Naive thymus-derived CD4-positive, alpha-beta T cell (primary cell): ENCODE measurements at regions of chr5 and their contacts with region 1.

Region 1: GRCh38 chr5:143824851-143825720 is 13.1 kb downstream of the HMHB1 start:
- DNase-seq: peak; percentile 56 to 86 (median 75)
- ATAC-seq: peak; percentile 94
- H3K4me3 ChIP-seq: no peak overlapping the region
- H3K4me3 Mint-ChIP-seq: no peak overlapping the region
- H3K27ac ChIP-seq: no peak overlapping the region
- H3K27ac Mint-ChIP-seq: no peak overlapping the region
- H3K4me1 ChIP-seq: peaks cover 0 to 6% of the 10 kb centered on the region in 2 donors
- H3K4me1 Mint-ChIP-seq: peaks cover 0 to 18% (median 10%) of the 10 kb centered on the region in 7 donors
- H3K27me3 ChIP-seq: no peaks in the 10 kb centered on the region
- H3K27me3 Mint-ChIP-seq: peaks cover 0 to 5% (median 3%) of the 10 kb centered on the region in 5 donors

Region 2: DNA sequence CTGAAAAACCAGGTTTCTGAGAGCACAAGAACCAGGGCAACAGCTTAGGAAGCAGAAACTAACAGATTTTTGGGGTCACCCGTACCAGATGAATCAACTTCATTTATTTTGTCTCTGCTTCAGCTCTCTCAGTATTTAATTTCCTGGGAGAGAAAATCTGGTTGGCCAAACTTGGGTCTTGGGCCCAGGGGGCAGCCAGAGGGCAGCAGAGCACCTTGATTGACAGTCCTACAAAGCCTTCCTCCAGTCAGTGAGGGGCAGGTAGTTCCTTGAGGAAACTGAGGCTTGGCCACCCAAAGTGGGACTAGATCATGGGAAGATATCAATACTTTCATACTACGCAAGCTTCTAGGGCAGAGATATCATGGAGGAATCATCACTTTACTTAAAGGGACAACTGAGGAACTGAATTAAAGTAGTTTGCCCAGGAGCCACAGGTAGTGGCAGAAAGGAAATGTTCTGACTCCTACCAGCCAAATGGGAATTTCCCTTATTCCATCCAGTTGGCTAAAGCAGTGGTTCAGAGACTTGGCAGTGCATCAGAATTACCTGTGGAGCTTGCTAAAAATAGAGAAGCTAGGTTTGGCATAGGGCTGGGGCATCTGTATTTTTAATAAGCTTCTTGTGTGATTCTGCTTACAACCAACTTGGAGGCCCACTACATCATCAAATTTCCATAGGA is 1076.4 kb before region 1 on chr5:
- CTCF ChIA-PET with region 1: no interaction called
- POLR2A ChIA-PET with region 1: no interaction called
- intact Hi-C with region 1: loop called in 1 of 2 experiments (anchors 1 kb)
- DNase-seq: peak in 8 of 9 donors; percentile 13 to 67 (median 54)
- ATAC-seq: peak; percentile 67
- H3K4me3 ChIP-seq: no peak overlapping the region
- H3K4me3 Mint-ChIP-seq: no peak overlapping the region
- H3K27ac ChIP-seq: no peak overlapping the region
- H3K27ac Mint-ChIP-seq: no peak overlapping the region
- H3K4me1 ChIP-seq: no peaks in the 10 kb centered on the region
- H3K4me1 Mint-ChIP-seq: peaks cover 0 to 17% (median 0%) of the 10 kb centered on the region in 7 donors
- H3K27me3 ChIP-seq: no peaks in the 10 kb centered on the region
- H3K27me3 Mint-ChIP-seq: peaks cover 0 to 14% (median 0%) of the 10 kb centered on the region in 5 donors

Region 3: DNA sequence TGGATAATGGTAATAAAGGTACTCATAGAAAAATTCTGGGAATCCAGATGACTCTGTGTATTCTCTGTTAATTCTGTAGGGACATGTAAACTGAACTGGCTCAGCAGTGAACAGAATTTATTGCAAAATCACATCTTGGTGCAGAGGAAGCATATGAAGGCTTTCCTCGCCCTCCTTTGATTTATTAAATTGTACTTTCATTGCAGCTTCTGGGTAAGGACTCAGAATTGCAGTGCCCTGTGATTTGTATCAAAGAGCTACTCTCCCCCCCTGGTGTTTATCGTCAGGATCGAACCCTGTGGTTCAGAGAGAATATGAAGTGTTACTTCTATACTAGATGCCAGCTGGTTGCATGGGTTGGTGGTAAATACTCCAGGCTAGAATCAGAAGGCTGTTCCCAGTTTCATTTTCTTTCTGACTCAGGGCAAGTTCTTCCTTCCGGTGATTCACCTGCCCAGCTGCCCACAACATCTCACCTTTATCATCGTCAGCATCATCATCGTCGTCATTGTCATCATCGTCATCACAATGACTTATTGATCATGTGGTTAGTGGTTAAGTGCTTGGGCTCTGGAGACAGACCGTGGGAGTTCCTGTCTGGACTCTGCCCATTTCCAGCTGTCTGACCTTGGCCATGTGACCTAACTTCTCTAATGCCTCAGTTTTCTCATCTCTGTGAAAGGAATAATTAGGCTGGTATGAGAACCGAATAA is 816.1 kb before region 1 on chr5:
- CTCF ChIA-PET with region 1: no interaction called
- POLR2A ChIA-PET with region 1: no interaction called
- intact Hi-C with region 1: loop called in 1 of 2 experiments (anchors 2 kb)
- DNase-seq: peak in 8 of 9 donors; percentile 10 to 73 (median 36)
- ATAC-seq: peak; percentile 91
- H3K4me3 ChIP-seq: no peak overlapping the region
- H3K4me3 Mint-ChIP-seq: peak overlapping the region in 4 of 10 donors; percentile 4 to 44 (median 27)
- H3K27ac ChIP-seq: no peak overlapping the region
- H3K27ac Mint-ChIP-seq: peak overlapping the region in 7 of 9 donors; percentile 45 to 86 (median 71)
- H3K4me1 ChIP-seq: peaks cover 12 to 43% of the 10 kb centered on the region in 2 donors
- H3K4me1 Mint-ChIP-seq: peaks cover 27 to 74% (median 32%) of the 10 kb centered on the region in 7 donors
- H3K27me3 ChIP-seq: no peaks in the 10 kb centered on the region
- H3K27me3 Mint-ChIP-seq: no peaks in the 10 kb centered on the region

Region 4: GRCh38 chr5:143182901-143183820 is 641.9 kb before region 1 on chr5:
- CTCF ChIA-PET with region 1: no interaction called
- POLR2A ChIA-PET with region 1: no interaction called
- intact Hi-C with region 1: loop called in 1 of 2 experiments (anchors 10 kb)
- DNase-seq: peak in 1 of 9 donors; percentile 80
- ATAC-seq: peak; percentile 61
- H3K4me3 ChIP-seq: no peak overlapping the region
- H3K4me3 Mint-ChIP-seq: peak overlapping the region in 1 of 10 donors; percentile 66
- H3K27ac ChIP-seq: no peak overlapping the region
- H3K27ac Mint-ChIP-seq: peak overlapping the region in 1 of 9 donors; percentile 89
- H3K4me1 ChIP-seq: peaks cover 3 to 22% of the 10 kb centered on the region in 2 donors
- H3K4me1 Mint-ChIP-seq: peaks cover 6 to 65% (median 16%) of the 10 kb centered on the region in 7 donors
- H3K27me3 ChIP-seq: no peaks in the 10 kb centered on the region
- H3K27me3 Mint-ChIP-seq: no peaks in the 10 kb centered on the region

Region 5: GRCh38 chr5:143605403-143606005 is 219.6 kb before region 1 on chr5:
- CTCF ChIA-PET with region 1: no interaction called
- POLR2A ChIA-PET with region 1: interaction called, 3 read pairs
- intact Hi-C with region 1: loop called in 1 of 2 experiments (anchors 5 kb)
- DNase-seq: peak in 3 of 9 donors; percentile 12 to 16 (median 13)
- ATAC-seq: peak; percentile 69
- H3K4me3 ChIP-seq: no peak overlapping the region
- H3K4me3 Mint-ChIP-seq: peak overlapping the region in 2 of 10 donors; percentile 57 to 84
- H3K27ac ChIP-seq: no peak overlapping the region
- H3K27ac Mint-ChIP-seq: peak overlapping the region in 2 of 9 donors; percentile 51 to 93
- H3K4me1 ChIP-seq: peaks cover 6 to 22% of the 10 kb centered on the region in 2 donors
- H3K4me1 Mint-ChIP-seq: peaks cover 24 to 36% (median 27%) of the 10 kb centered on the region in 7 donors
- H3K27me3 ChIP-seq: no peaks in the 10 kb centered on the region
- H3K27me3 Mint-ChIP-seq: peaks cover 6 to 25% (median 18%) of the 10 kb centered on the region in 5 donors

Region 6: GRCh38 chr5:143796125-143796524 is 29.0 kb before region 1 on chr5:
- CTCF ChIA-PET with region 1: no interaction called
- POLR2A ChIA-PET with region 1: no interaction called
- intact Hi-C with region 1: no loop called
- DNase-seq: no peak
- ATAC-seq: no peak
- H3K4me3 ChIP-seq: no peak overlapping the region
- H3K4me3 Mint-ChIP-seq: no peak overlapping the region
- H3K27ac ChIP-seq: no peak overlapping the region
- H3K27ac Mint-ChIP-seq: no peak overlapping the region
- H3K4me1 ChIP-seq: no peaks in the 10 kb centered on the region
- H3K4me1 Mint-ChIP-seq: peaks cover 0 to 18% (median 8%) of the 10 kb centered on the region in 7 donors
- H3K27me3 ChIP-seq: no peaks in the 10 kb centered on the region
- H3K27me3 Mint-ChIP-seq: peaks cover 4 to 8% (median 5%) of the 10 kb centered on the region in 5 donors